PC-3 (cell line): ENCODE measurements at regions of chr3 and their contacts with region 1.

Region 1: DNA sequence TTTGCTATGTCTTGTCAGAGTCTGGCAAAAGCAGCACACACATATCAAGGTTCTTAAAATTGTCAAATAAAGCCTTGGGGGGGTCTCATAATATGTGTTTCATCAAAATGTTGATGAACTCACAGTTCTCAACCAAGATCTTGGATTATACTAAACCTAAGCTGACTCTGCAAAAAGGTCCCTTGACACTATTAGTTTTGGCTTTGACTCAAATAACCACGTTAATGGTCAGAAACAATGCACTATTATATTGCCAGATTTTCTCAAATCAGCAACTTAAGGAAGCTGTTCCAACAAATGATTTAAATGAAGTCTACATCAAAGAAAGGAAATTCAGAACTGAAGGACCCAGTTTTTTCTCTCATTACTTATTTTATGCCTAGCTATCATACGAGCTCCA is 1063.9 kb downstream of the ROBO1 start:
- DNase-seq: peak; percentile 13
- ATAC-seq: no peak
- H3K4me3 ChIP-seq: no peak overlapping the region
- H3K27ac ChIP-seq: no peak overlapping the region
- H3K4me1 ChIP-seq: peaks cover 16% of the 10 kb centered on the region; the same call in 1 of the 2 replicates
- H3K27me3 ChIP-seq: no peaks in the 10 kb centered on the region
- CTCF ChIP-seq: no peak

Region 2: DNA sequence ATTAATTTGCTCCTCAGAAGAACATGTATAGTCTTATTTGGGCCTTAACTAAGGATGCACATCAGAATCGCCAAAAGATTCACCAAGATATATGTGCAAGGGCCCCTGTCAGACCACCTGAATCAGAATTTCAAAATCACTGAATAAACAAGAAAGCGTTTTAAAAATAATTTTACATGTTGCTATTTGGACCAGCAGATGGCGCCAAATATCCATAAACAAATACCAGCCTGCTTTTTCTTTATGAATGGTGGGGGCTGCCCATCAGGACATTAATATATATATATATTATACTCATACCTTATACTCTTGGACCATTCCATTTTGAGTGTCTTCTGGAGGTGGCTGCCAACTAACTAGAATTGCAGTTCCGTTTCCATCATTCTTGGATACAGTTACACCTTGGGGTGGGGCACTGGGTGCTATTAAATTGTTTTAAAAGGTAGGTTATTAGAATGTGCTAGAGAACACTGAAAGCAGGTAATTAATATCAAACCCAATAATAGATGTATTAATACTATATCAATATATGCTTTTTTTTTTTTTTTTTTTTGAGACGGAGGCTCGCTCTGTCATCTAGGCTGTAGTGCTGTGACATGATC is 44.5 kb before region 1 on chr3:
- CTCF ChIA-PET with region 1: no interaction called
- POLR2A ChIA-PET with region 1: no interaction called
- intact Hi-C with region 1: no loop called
- DNase-seq: peak; percentile 76
- ATAC-seq: no peak
- H3K4me3 ChIP-seq: no peak overlapping the region
- H3K27ac ChIP-seq: no peak overlapping the region
- H3K4me1 ChIP-seq: no peaks in the 10 kb centered on the region
- H3K27me3 ChIP-seq: no peaks in the 10 kb centered on the region
- CTCF ChIP-seq: peak; percentile 79

Region 3: GRCh38 chr3:78809966-78810365 is 106.0 kb after region 1 on chr3:
- CTCF ChIA-PET with region 1: no interaction called
- POLR2A ChIA-PET with region 1: interaction called, 21 read pairs
- intact Hi-C with region 1: no loop called
- DNase-seq: no peak
- ATAC-seq: no peak
- H3K4me3 ChIP-seq: no peak overlapping the region
- H3K27ac ChIP-seq: no peak overlapping the region
- H3K4me1 ChIP-seq: peaks cover 4% of the 10 kb centered on the region; the same call in 1 of the 2 replicates
- H3K27me3 ChIP-seq: no peaks in the 10 kb centered on the region
- CTCF ChIP-seq: no peak